Panc1 (cell line): ENCODE measurements at regions of chr19 and their contacts with region 1.

Region 1: GRCh38 chr19:35919306-35919705 is 11.2 kb upstream of the TYROBP start:
- DNase-seq: no peak
- ATAC-seq: no peak
- H3K4me3 ChIP-seq: no peak overlapping the region
- H3K27ac ChIP-seq: no peak overlapping the region
- H3K4me1 ChIP-seq: no peaks in the 10 kb centered on the region
- H3K27me3 ChIP-seq: no peaks in the 10 kb centered on the region
- CTCF ChIP-seq: no peak

Region 2: DNA sequence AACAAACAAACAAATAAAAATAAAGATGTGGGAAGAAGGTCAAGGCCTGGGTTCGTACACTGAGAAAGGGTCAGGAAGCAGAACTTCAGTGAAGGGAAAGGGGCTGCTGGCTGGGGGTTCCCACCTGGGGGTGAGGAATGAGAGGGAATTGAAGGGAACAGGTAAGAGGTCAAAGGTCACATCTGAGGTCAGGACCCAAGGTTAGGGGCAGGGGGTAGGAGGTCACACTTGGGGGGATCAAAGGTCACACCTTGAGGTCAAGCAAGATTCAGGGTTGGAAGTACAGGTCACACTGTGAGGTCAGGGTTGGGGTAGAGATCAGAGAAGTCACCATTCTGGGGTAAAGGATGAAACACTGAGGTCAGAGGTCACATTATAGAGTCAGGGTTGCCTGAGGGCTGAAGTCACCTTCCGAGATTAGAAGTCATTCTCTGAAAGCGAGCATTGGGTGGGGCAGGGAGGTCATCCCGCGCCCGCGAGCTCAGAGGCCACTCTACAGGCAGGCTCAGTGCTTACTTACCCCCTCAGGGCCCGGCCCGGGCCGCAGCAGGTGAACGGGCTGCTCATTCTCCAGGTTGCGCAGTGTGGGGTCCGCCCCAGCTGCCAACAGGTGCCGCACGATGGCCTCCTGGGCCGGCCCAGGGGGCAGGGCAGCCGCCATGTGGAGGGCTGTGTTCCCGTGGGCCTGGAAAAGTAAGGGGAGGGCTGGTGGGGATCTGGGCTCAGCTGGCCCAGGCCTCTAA is 29.8 kb before region 1 on chr19:
- CTCF ChIA-PET with region 1: interaction called, 11 read pairs
- POLR2A ChIA-PET with region 1: no interaction called
- in situ Hi-C with region 1: no loop called
- intact Hi-C with region 1: no loop called
- DNase-seq: no peak
- ATAC-seq: peak; percentile 31; the same call in 1 of the 2 replicates
- H3K4me3 ChIP-seq: no peak overlapping the region
- H3K27ac ChIP-seq: no peak overlapping the region
- H3K4me1 ChIP-seq: no peaks in the 10 kb centered on the region
- H3K27me3 ChIP-seq: no peaks in the 10 kb centered on the region
- CTCF ChIP-seq: no peak

Region 3: DNA sequence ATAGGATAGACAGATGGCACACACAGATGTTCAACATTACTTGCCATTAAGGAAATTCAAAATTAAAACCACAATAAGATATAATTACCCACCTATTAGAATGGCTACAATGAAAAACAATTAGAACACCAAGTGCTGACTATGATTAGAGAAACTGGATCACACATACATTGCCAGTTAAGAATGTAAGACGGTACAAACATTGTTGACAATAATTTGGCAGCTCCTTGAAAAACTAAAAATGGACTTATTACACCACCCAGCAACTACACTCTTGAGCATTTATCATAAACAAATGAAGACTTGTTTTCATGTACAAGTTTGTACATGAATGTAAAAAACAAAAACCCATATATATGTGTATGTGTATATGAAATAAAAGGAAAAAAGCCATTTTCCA is 733.7 kb after region 1 on chr19:
- CTCF ChIA-PET with region 1: no interaction called
- POLR2A ChIA-PET with region 1: no interaction called
- in situ Hi-C with region 1: no loop called
- intact Hi-C with region 1: no loop called
- DNase-seq: no peak
- ATAC-seq: no peak
- H3K4me3 ChIP-seq: no peak overlapping the region
- H3K27ac ChIP-seq: no peak overlapping the region
- H3K4me1 ChIP-seq: no peaks in the 10 kb centered on the region
- H3K27me3 ChIP-seq: no peaks in the 10 kb centered on the region
- CTCF ChIP-seq: no peak